HepG2 (cell line): ENCODE measurements at regions of chr14 and their contacts with region 1.

Region 1: DNA sequence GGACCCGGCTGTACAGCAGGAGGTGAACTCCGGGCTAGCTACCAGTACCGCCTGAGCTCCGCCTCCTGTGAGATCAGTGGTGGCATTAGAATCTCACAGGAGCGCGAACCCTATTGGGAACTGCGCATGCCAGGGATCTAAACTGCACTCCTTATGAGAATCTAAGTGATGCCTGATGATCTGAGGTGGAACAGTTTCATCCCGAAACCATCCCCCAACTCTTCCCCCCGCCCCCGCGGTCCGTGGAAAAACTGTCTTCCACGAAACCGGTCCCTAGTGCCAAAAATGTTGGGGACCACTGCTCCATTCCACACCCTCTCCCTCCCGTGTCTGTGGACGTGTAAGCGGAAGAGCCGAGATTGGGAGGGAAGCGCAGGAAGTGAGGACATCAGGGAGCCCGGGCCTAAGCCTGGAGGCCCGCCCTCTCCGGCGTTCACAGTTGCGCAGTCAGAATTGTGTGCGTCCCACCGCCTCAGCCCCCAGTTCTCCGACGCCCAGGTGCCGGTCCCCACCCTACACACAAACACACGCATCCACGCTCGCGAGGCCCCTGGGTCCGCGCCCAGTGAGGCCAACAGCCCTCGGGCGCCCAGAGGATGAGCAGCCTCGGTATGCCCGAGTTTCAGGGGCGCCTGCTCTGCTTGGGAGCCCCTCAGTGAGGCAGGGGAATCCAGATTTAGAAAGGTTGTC is 1.8 kb upstream of the RNASE4 start:
- DNase-seq: peak; percentile 94
- ATAC-seq: peak; percentile 74
- H3K4me3 ChIP-seq: peak overlapping the region; percentile 83 to 89 (median 89)
- H3K27ac ChIP-seq: peak overlapping the region; percentile 97
- H3K4me1 ChIP-seq: peaks cover 22% of the 10 kb centered on the region
- H3K27me3 ChIP-seq: peaks cover 0 to 5% of the 10 kb centered on the region in 2 experiments; a peak in 1 of 5 replicates
- CTCF ChIP-seq: 0 out of 2 replicates have a peak, but pooled peaks have one; percentile 8
- EP300 ChIP-seq: no peak
- POLR2A ChIP-seq: peak; percentile 82 to 84
- RAD21 ChIP-seq: 0 out of 2 replicates have a peak, but pooled peaks have one; percentile 5

Region 2: DNA sequence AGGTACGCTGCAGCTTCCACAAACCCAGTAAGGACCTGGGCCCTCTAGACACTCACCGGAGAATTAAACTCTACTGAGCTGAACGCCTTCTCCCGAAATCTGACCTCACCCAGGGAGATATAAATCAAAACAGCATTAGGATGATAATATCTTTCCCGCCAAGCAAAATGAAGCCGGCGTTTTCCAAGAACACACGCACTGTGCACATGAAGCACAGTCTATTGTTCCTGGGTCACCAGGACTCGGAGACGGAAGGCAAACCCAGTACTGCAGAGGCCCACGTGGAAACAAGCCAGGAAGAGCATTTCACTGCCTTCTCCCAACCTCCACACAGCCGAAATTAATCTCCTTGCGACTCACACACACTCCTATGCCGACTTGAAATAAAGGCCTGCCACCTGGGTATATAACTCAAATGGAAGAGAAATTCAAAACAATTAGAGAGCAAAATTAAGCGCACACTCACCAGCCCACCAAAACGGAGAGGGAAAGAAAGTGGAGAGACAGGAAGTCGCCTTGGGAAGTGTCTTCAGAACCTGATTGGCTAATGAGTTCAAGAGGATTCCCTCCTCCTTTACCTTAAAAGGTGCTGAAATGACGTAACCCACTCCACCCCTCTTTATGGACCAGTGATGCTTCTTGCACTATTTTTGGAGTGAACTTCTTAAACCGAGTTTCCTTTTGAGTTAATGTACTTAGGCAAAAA is 349.6 kb before region 1 on chr14 and contains the start of gene CCNB1IP1:
- CTCF ChIA-PET with region 1: no interaction called
- POLR2A ChIA-PET with region 1: no interaction called
- in situ Hi-C with region 1: loop called (anchors 10 kb)
- intact Hi-C with region 1: loop called (anchors 1 kb)
- DNase-seq: peak; percentile 94
- ATAC-seq: peak; percentile 96
- H3K4me3 ChIP-seq: peak within 1 kb of the TSS; percentile 59 to 78 (median 75)
- H3K27ac ChIP-seq: peak within 1 kb of the TSS; percentile 79
- H3K4me1 ChIP-seq: peaks cover 57% of the 10 kb centered on the region
- H3K27me3 ChIP-seq: no peaks in the 10 kb centered on the region; a peak in 1 of 5 replicates
- CTCF ChIP-seq: no peak
- EP300 ChIP-seq: no peak
- POLR2A ChIP-seq: peak; percentile 78 to 94
- RAD21 ChIP-seq: no peak
- total RNA-seq, gene CCNB1IP1: 98.3 and 110 TPM in 2 replicates

Region 3: DNA sequence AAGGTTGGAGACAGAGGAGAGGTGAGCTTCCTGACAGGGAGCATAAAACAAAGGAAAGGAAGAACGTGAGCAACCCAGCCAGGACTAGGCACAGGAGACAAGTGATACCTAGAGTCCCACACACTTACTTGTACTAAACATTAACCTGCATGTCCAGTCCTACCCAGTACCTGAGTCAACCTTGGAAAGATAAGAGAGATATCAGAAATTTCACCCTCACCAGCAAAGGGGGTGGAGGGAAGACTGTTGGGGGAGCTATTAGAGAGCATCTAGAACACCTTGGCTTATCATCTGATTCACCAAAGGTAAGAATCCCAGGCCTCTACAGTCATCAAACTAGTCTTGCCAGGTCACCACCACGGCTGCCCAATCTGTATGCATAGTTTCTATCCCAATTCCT is 257.7 kb before region 1 on chr14:
- CTCF ChIA-PET with region 1: no interaction called
- POLR2A ChIA-PET with region 1: no interaction called
- in situ Hi-C with region 1: no loop called
- intact Hi-C with region 1: no loop called
- DNase-seq: no peak
- ATAC-seq: no peak
- H3K4me3 ChIP-seq: no peak overlapping the region
- H3K27ac ChIP-seq: no peak overlapping the region
- H3K4me1 ChIP-seq: peaks cover 37% of the 10 kb centered on the region
- H3K27me3 ChIP-seq: no peaks in the 10 kb centered on the region
- CTCF ChIP-seq: no peak
- EP300 ChIP-seq: no peak
- POLR2A ChIP-seq: no peak
- RAD21 ChIP-seq: no peak

Region 4: DNA sequence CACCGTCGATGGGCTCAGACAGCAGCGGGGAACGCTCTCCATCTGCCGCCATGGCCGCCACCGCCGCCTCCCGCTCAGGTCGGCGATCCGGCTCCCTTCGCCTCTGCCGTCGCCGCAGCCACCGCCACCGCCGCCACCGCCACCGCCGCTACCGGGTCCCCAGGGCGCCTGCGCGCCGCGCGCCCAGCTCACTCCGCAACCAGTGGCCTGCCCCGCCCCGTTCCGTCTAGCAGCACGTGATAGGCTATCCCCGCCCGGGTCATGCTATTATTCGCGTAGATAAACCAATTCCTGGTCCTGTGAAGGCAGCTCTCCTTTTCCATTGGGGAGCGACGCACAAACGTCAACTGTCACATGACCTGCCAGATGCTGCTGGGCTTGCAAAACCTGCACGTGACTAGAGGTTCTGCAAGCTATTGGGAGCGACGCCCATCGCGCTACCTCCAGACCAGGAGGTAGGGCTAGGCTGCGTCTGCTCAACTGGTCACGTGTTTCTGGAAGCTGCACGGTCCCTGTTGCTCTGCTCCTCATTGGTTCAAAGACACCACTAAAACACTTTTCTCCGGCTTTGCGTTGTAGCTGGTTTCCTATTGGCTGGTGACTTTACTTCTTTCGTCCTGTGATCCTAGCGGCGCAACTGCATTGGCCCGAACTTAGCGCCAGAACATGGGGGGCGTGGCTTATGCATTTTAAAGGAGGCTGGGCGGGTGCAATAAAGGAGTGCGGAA is 221.1 kb before region 1 on chr14 and contains the start of gene PIP4P1:
- CTCF ChIA-PET with region 1: no interaction called
- POLR2A ChIA-PET with region 1: interaction called, 22 read pairs
- in situ Hi-C with region 1: loop called (anchors 5 kb)
- intact Hi-C with region 1: loop called (anchors 1 kb)
- DNase-seq: peak; percentile 100
- ATAC-seq: peak; percentile 97
- H3K4me3 ChIP-seq: peak within 1 kb of the TSS; percentile 67 to 89 (median 78)
- H3K27ac ChIP-seq: peak within 1 kb of the TSS; percentile 80
- H3K4me1 ChIP-seq: peaks cover 56% of the 10 kb centered on the region
- H3K27me3 ChIP-seq: no peaks in the 10 kb centered on the region; a peak in 1 of 5 replicates
- CTCF ChIP-seq: no peak; the same call in 1 of the 2 replicates
- EP300 ChIP-seq: peak; percentile 25 to 56; a peak in 3 of 4 replicates
- POLR2A ChIP-seq: peak in 1 of 2 experiments; percentile 85; a peak in 3 of 4 replicates
- RAD21 ChIP-seq: peak; percentile 51
- total RNA-seq, gene PIP4P1: 31.9 and 33.4 TPM in 2 replicates

Region 5: DNA sequence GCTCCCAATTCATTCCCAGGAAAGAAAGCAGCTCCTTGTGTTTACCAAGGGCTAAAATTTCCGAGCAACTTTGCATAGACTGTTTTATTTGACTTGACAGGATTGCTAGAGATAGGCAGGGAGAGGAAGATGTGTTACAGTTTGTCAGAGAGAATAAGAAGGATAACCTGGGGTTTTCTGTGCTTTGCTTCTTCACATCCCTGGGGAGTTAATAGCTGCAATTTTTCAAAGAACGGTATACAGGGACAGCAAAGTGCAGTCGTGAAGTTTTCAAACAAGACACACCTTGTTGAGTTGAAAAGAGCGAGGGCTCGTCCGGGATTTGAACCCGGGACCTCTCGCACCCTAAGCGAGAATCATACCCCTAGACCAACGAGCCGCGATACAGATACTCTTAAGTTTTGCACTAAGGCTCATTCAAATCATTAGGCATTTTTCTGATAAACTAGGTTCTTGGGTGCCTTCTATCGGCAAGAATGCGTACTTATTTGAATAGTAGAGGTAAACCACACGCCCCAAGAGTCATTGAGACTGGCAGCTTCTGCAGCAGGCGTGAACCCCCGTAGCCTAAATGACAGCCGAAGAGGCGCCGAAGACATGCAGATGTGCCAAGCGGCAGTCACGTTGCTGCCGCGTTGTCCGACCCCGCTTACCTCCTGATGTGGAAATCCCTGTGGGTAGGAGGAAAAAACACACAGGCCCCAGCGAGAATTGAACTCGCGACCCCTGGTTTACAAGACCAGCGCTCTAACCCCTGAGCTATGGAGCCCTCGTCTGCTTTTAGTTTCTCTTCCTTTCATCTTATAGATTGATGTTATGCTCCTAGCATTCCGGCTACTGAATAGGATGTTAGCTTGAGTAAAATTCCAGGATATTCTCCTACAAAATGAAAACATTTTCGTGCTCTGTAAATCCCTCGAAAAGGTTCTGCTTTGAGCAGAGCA is 69.2 kb before region 1 on chr14:
- CTCF ChIA-PET with region 1: interaction called, 3 read pairs
- POLR2A ChIA-PET with region 1: interaction called, 105 read pairs
- in situ Hi-C with region 1: no loop called
- intact Hi-C with region 1: loop called (anchors 1 kb)
- DNase-seq: peak; percentile 99
- ATAC-seq: peak; percentile 84
- H3K4me3 ChIP-seq: peak overlapping the region; percentile 70 to 83 (median 77)
- H3K27ac ChIP-seq: peak overlapping the region; percentile 73
- H3K4me1 ChIP-seq: peaks cover 77% of the 10 kb centered on the region
- H3K27me3 ChIP-seq: no peaks in the 10 kb centered on the region; a peak in 1 of 5 replicates
- CTCF ChIP-seq: peak; percentile 92
- EP300 ChIP-seq: peak in 1 of 2 experiments; percentile 30; a peak in 1 of 4 replicates
- POLR2A ChIP-seq: no peak
- RAD21 ChIP-seq: peak; percentile 19; the same call in 1 of the 2 replicates

Region 6: DNA sequence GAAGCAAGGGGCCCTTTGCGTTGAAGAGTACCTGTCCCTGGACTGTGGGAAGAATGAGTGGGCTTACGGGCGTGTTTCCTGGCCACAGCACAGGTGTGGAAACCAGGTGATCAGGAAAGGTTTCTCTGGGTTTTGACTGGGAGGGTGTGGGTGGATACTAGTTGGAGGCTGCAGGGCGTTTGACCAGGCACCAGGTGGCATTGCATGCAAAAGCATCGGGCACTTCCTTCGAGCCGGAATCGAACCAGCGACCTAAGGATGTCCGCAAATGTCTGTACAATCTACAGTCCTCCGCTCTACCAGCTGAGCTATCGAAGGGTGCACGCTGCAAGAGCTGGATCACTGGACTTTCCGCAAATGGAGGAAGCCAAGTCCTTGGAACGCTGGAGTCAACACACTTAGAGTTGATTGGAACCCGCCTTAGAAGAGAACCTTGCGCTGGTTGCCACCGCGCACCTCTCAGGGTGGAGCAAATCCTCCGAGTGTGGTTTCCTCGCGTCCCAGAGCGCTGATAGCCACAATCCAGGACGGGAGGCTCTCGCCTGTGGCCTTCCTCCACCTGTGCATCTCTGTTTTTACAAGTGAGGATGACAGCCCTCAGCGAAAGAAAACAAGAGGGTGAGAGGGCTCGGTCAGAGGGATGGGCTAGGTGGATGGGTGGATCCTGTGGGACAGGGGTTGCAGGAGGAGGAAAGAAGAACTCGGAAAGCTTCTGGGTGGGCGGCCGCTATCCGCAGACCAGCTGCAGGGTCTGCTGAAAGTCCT is 19.4 kb before region 1 on chr14:
- CTCF ChIA-PET with region 1: interaction called, 5 read pairs
- POLR2A ChIA-PET with region 1: interaction called, 141 read pairs
- in situ Hi-C with region 1: no loop called
- intact Hi-C with region 1: loop called (anchors 1 kb)
- DNase-seq: peak; percentile 76
- ATAC-seq: peak; percentile 64
- H3K4me3 ChIP-seq: peak overlapping the region in 1 of 3 experiments; percentile 50; a peak in 1 of 6 replicates
- H3K27ac ChIP-seq: no peak overlapping the region
- H3K4me1 ChIP-seq: peaks cover 84% of the 10 kb centered on the region
- H3K27me3 ChIP-seq: no peaks in the 10 kb centered on the region
- CTCF ChIP-seq: peak; percentile 88
- EP300 ChIP-seq: no peak
- POLR2A ChIP-seq: no peak
- RAD21 ChIP-seq: peak; percentile 91

Region 7: GRCh38 chr14:21057803-21058675 is 375.5 kb after region 1 on chr14 and contains the start of gene RNASE8:
- CTCF ChIA-PET with region 1: no interaction called
- POLR2A ChIA-PET with region 1: interaction called, 9 read pairs
- in situ Hi-C with region 1: no loop called
- intact Hi-C with region 1: loop called (anchors 5 kb)
- DNase-seq: no peak
- ATAC-seq: no peak
- H3K4me3 ChIP-seq: no peak within 1 kb of the TSS; a peak in 1 of 6 replicates
- H3K27ac ChIP-seq: peak within 1 kb of the TSS; percentile 92
- H3K4me1 ChIP-seq: peaks cover 99% of the 10 kb centered on the region
- H3K27me3 ChIP-seq: no peaks in the 10 kb centered on the region
- CTCF ChIP-seq: peak; percentile 56
- EP300 ChIP-seq: no peak
- POLR2A ChIP-seq: no peak
- RAD21 ChIP-seq: no peak
- total RNA-seq, gene RNASE8: not detected in 2 replicates